Psoas muscle (tissue), 8 donors: ENCODE measurements at regions of chr3 and their contacts with region 1.

Region 1: GRCh38 chr3:5122030-5122740 is at the start of gene ARL8B:
- DNase-seq: peak; percentile 94 to 96
- ATAC-seq: peak; percentile 92 to 97 (median 95)
- H3K4me3 ChIP-seq: peak within 1 kb of the TSS; percentile 92
- H3K27ac ChIP-seq: peak within 1 kb of the TSS; percentile 95
- H3K4me1 ChIP-seq: peaks cover 38% of the 10 kb centered on the region
- H3K27me3 ChIP-seq: no peaks in the 10 kb centered on the region
- CTCF ChIP-seq: peak; percentile 98
- total RNA-seq, gene ARL8B: 35.1 to 154 (median 109) TPM

Region 2: GRCh38 chr3:5162102-5162501 is 39.9 kb after region 1 on chr3:
- intact Hi-C with region 1: loop called in 1 of 2 experiments (anchors 5 kb)
- DNase-seq: no peak
- ATAC-seq: peak; percentile 72 to 84 (median 81)
- H3K4me3 ChIP-seq: no peak overlapping the region
- H3K27ac ChIP-seq: no peak overlapping the region
- H3K4me1 ChIP-seq: peaks cover 62% of the 10 kb centered on the region
- H3K27me3 ChIP-seq: no peaks in the 10 kb centered on the region
- CTCF ChIP-seq: no peak

Region 3: GRCh38 chr3:5187156-5187919 is 65.2 kb after region 1 on chr3 and contains the start of gene EDEM1:
- intact Hi-C with region 1: loop called (anchors 1 to 5 kb)
- DNase-seq: peak; percentile 95 to 97
- ATAC-seq: peak; percentile 93 to 97 (median 96)
- H3K4me3 ChIP-seq: peak within 1 kb of the TSS; percentile 92
- H3K27ac ChIP-seq: peak within 1 kb of the TSS; percentile 94
- H3K4me1 ChIP-seq: peaks cover 27% of the 10 kb centered on the region
- H3K27me3 ChIP-seq: no peaks in the 10 kb centered on the region
- CTCF ChIP-seq: no peak
- total RNA-seq, gene EDEM1: 5.5 to 11.7 (median 6.5) TPM

Region 4: DNA sequence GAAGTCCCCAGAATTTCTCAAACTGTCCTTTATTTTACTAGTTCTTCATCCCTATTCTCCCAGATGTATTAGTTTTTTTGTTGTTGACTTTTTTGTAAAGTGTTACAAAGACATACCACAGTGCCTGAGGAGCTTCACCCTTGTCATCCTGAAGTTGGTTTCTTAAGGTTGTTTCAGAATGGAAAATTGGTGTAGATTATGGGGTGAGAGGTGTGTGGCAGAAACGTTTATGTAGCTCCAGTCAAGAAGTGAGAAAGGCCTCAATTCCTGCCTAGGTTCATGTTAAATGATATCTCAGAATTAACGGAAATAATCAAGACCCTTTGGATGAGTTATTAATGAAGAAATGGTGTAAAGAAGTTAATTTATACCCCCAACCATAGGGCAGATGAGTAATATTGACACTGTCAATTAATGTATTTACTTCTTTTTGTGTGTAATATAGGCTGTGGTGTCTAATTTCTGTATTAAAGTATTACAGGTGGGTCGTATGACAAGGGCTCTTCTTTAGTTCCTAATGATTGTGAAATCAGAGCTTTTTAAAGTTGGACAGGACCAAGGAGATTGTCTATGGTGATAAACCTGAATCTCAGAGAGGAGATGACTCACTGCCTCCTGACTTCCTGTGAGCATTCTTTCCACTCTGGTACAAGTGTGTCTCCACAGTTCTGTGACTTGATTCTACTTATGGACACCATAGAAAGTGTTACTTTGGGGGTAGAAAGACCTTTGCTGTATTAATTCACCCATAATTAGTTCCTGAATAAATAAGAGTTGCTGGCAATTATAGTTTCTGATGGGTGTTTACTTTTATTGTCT is 72.4 kb after region 1 on chr3:
- intact Hi-C with region 1: loop called (anchors 2 to 5 kb)
- DNase-seq: no peak
- ATAC-seq: peak; percentile 89 to 96 (median 92)
- H3K4me3 ChIP-seq: no peak overlapping the region
- H3K27ac ChIP-seq: peak overlapping the region; percentile 71
- H3K4me1 ChIP-seq: peaks cover 58% of the 10 kb centered on the region
- H3K27me3 ChIP-seq: no peaks in the 10 kb centered on the region
- CTCF ChIP-seq: no peak